ENCODE measurements at regions of chr5 and their contacts with region 1.

Region 1: GRCh38 chr5:112848116-112848811 is 12.8 kb upstream of the SRP19 start:
- DNase-seq: peak; percentile 61

Region 2: DNA sequence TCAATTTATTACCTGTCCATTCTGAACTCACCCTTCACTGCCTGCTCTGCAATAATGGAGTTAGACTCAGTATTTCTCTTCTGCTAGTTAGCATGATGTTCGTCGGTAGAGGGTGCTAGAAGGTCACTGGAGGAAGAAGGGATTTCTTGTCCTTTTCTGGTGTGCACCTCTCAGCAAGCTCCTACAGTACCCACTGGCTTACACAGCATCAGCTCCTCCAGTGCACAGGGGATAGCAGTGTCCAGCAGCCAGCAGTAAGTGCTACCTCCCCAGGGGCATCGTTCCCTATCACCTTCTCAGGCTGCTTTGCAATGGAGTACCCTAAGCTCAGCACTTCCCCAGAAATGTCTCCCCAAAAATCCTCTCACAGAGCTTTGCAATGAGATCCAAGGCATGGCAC is 156.5 kb before region 1 on chr5:
- CTCF ChIA-PET with region 1: interaction called, 11 read pairs
- POLR2A ChIA-PET with region 1: no interaction called
- DNase-seq: peak; percentile 52